Calu3 (cell line): ENCODE measurements at regions of chr9 and their contacts with region 1.

Region 1: GRCh38 chr9:109119439-109120203 is at the start of gene TMEM245:
- DNase-seq: peak; percentile 91
- H3K4me3 Mint-ChIP-seq: peak within 1 kb of the TSS; percentile 85
- H3K27ac Mint-ChIP-seq: peak within 1 kb of the TSS; percentile 58
- H3K4me1 Mint-ChIP-seq: peaks cover 15% of the 10 kb centered on the region
- H3K27me3 Mint-ChIP-seq: no peaks in the 10 kb centered on the region
- CTCF ChIP-seq: no peak
- total RNA-seq, gene TMEM245: 52.2 and 54.0 TPM in 2 replicates

Region 2: DNA sequence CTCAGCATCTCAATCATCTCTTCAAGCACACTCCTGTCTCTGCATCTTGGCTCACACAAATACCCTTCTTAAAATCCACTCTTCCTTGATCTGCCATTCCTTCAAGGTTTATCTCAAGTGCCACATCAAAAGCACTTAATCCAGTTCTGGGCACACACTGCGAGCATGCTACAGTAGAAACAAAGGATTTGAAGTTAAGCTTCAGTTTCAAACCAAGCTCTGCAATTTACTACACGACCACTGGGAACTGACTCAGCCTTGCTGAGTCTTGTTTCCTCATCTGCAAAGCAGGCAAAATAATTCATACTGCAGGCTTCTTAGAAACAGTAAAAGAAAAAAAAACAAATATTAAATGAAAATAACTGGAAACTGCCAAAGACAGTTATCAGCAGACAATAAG is 55.9 kb before region 1 on chr9:
- CTCF ChIA-PET with region 1: no interaction called
- intact Hi-C with region 1: loop called (anchors 10 kb)
- DNase-seq: no peak
- H3K4me3 Mint-ChIP-seq: no peak overlapping the region
- H3K27ac Mint-ChIP-seq: no peak overlapping the region
- H3K4me1 Mint-ChIP-seq: peaks cover 7% of the 10 kb centered on the region
- H3K27me3 Mint-ChIP-seq: no peaks in the 10 kb centered on the region
- CTCF ChIP-seq: no peak

Region 3: DNA sequence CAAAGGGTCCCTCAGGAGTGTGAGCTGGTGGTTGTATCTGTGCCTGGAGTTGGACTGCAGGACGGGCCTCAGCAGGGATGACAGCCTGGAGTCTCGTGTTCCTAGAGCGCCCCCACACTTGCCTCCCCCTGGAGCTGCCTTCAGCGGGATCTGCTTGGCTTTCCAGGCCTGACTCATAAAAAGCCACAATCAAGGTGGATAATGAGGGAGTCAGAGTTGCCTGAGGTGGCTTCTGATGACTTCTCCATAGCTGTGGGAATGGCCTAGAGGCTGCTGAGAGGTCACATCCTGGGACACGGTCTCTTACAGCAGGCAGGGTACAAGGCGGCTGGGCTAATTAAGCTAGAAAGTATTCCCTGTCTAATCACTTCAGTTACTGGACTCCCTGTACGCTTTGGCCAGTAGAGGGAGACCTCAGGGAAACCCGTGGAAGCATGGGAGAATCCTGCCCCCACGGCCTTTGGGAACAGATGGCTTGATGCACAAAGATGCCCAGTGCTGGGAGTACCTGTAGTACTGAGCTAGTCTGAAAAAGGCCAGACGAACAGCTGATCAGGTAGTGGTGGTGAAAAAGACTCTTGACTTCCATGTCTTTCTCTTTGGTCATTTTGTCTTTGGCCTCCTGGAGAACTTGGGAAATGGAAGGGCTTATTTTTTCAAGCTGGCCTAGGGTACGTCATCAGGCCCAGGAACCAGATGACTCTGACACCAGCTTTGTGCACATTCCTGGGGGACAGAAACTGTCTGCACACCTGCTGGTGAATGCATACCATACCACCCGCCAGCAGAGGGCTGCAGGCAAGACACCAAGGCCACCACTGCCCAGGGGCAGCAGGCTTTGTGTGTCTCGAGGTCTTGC is 63.5 kb after region 1 on chr9:
- CTCF ChIA-PET with region 1: no interaction called
- intact Hi-C with region 1: no loop called
- DNase-seq: peak; percentile 61
- H3K4me3 Mint-ChIP-seq: no peak overlapping the region
- H3K27ac Mint-ChIP-seq: no peak overlapping the region
- H3K4me1 Mint-ChIP-seq: no peaks in the 10 kb centered on the region
- H3K27me3 Mint-ChIP-seq: peaks cover 13% of the 10 kb centered on the region
- CTCF ChIP-seq: peak; percentile 54

Region 4: DNA sequence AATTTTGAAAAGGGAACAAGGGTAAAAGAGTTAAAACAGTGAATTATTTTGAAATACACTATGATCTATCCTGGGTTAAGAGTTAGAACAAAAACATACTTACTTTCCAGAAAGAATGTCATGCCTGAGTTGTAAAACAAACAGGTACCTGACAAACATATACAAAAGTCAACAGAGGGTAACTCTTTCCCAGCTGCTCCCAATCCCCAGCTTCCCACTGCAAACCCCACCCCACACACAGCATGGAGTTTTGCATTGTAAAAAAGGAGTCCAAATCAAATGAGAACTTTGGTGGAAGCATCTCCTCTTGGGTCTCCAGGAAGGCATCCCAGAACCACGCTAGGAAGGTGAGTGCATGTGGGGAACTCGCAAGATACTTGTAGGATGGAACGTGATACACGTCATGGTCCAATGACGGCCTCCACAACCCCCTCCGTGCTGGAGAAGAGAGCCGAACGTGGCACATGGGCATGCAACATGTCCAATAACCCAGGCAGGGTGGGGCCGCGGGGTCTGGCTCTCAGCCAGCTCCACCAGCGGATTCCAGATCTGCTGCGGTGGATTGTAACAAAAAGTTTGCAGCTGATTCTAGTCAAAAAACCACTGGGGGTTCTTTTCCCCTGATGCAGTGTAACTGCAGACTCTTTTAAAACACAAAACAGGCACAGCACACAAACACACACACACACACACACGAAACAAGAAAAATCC is 145.4 kb after region 1 on chr9:
- CTCF ChIA-PET with region 1: no interaction called
- intact Hi-C with region 1: no loop called
- DNase-seq: no peak
- H3K4me3 Mint-ChIP-seq: no peak overlapping the region
- H3K27ac Mint-ChIP-seq: no peak overlapping the region
- H3K4me1 Mint-ChIP-seq: no peaks in the 10 kb centered on the region
- H3K27me3 Mint-ChIP-seq: no peaks in the 10 kb centered on the region
- CTCF ChIP-seq: no peak